Activated CD4-positive, alpha-beta T cell treated with anti-CD3 and anti-CD28 coated beads for 36 hours (primary cell): ENCODE measurements at regions of chr3 and their contacts with region 1.

Region 1: GRCh38 chr3:10026084-10026890 is at the start of gene FANCD2:
- DNase-seq: peak; percentile 95
- ATAC-seq: peak; percentile 91
- H3K4me3 Mint-ChIP-seq: peak within 1 kb of the TSS; percentile 95
- H3K27ac Mint-ChIP-seq: peak within 1 kb of the TSS; percentile 99
- H3K4me1 Mint-ChIP-seq: peaks cover 25% of the 10 kb centered on the region
- H3K27me3 Mint-ChIP-seq: no peaks in the 10 kb centered on the region
- total RNA-seq, gene FANCD2: 86.4 to 87.7 TPM

Region 2: DNA sequence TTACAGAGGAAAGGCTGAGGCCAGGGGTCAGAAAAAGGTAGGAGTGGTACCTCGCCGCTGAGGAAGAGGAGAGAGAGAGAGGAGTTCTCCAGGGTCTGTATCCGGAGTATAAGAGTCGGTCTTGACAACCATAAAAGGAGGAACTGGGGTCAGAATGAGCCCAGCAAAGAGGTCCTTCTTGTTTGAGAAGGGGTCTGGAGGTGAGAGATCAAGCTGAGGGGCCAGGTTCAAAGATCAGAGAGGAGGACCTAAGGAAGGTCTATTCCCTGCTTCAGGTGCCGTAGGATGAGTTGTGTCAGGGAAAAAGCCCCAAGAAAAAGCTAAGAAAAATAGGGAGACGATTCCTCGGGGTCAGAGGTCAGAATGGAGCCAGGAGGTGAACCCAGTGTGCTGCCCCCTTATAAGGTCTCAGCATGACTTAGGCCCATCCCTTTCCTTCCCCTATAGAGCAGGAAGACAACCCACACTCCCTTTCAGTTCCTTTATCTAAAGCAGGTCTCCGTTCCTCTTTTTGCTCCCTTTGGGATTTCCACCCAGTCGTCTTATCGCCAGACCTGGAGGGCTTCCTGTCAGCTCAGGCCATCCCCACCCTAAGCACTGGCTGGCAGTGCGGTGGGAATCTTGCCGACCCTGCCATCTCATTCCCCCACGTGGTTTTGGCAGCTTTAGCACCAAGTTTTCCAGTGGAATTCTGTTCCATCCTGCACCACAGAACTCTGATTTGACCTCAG is 376.3 kb before region 1 on chr3:
- CTCF ChIA-PET with region 1: no interaction called
- POLR2A ChIA-PET with region 1: no interaction called
- intact Hi-C with region 1: loop called in 1 of 2 experiments (anchors 2 kb)
- DNase-seq: no peak
- ATAC-seq: peak; percentile 1
- H3K4me3 Mint-ChIP-seq: peak overlapping the region; percentile 95
- H3K27ac Mint-ChIP-seq: peak overlapping the region; percentile 92
- H3K4me1 Mint-ChIP-seq: peaks cover 24% of the 10 kb centered on the region
- H3K27me3 Mint-ChIP-seq: no peaks in the 10 kb centered on the region

Region 3: GRCh38 chr3:9843715-9844438 is 182.4 kb before region 1 on chr3 and contains the start of gene RPUSD3:
- CTCF ChIA-PET with region 1: no interaction called
- POLR2A ChIA-PET with region 1: no interaction called
- intact Hi-C with region 1: loop called in 1 of 2 experiments (anchors 1 kb)
- DNase-seq: peak; percentile 98
- ATAC-seq: peak; percentile 97
- H3K4me3 Mint-ChIP-seq: peak within 1 kb of the TSS; percentile 99
- H3K27ac Mint-ChIP-seq: peak within 1 kb of the TSS; percentile 96
- H3K4me1 Mint-ChIP-seq: peaks cover 28% of the 10 kb centered on the region
- H3K27me3 Mint-ChIP-seq: no peaks in the 10 kb centered on the region
- total RNA-seq, gene RPUSD3: 79.2 to 81.5 TPM

Region 4: DNA sequence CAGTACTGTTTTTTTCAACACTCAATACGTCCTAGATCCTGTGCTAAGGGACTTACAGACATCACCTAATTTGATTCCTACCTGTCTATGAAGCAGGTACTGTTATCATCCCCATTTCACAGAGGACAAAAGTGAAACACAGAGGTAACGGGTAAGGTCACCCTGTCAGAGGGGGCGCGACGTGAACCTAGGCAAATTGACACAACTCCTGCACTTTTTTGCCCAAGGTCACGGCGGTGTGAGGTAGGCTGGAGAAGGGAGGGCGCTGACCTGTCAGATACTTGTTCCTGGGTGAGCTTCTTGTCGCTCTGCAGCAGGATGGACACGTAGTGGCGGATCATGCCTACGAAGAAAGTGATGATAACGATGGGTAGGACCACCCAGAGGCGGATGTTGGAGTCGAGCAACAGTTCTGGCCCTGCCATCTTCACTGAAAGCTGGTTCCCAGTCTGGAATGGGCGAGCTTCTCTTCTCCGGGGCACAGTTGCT is 40.0 kb before region 1 on chr3:
- CTCF ChIA-PET with region 1: no interaction called
- POLR2A ChIA-PET with region 1: interaction called, 3 read pairs
- intact Hi-C with region 1: loop called (anchors 1 kb)
- DNase-seq: no peak
- ATAC-seq: peak; percentile 31
- H3K4me3 Mint-ChIP-seq: peak overlapping the region; percentile 94
- H3K27ac Mint-ChIP-seq: peak overlapping the region; percentile 98
- H3K4me1 Mint-ChIP-seq: peaks cover 32% of the 10 kb centered on the region
- H3K27me3 Mint-ChIP-seq: no peaks in the 10 kb centered on the region

Region 5: DNA sequence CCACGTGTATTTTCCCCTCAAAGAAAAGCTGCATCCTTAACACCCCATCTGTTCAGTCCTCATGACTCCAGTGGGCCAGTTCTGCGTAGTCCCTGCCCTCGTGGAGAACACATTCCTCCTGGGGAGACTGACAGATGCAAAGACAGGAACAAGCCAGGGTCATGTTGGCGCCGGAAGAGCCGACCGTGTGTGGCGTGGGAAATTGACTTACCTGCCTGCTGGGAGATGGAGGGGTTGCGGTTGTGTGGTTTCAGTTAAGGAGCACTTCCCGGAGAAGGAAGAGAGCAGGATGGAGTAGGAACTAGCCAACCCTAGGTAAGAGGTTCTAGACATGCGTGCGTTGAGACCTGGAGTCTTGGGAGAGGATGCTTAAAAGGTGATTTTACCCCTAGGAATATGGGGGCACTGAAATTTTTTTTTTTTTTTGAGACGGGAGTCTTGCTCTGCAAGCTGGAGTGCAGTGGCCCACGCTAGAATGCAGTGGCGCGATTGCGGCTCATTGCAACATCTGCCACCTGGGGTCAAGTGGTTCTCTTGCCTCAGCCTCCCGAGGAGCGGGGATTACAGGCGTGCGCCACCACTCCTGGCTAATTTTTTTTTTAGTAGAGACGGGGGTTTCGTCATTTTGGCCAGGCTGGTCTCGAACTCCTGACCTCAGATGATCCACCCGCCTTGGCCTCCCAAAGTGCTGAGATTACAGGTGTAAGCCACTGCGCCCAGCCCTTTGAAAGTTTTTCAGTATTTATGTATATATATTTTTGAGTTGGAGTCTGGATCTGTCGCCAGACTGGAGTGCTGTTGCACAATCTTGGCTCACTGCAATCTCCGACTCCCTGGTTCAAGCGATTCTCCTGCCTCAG is 116.7 kb after region 1 on chr3:
- CTCF ChIA-PET with region 1: interaction called, 3 read pairs
- POLR2A ChIA-PET with region 1: no interaction called
- intact Hi-C with region 1: loop called in 1 of 2 experiments (anchors 1 kb)
- DNase-seq: peak; percentile 57
- ATAC-seq: peak; percentile 15
- H3K4me3 Mint-ChIP-seq: peak overlapping the region; percentile 97
- H3K27ac Mint-ChIP-seq: peak overlapping the region; percentile 89
- H3K4me1 Mint-ChIP-seq: peaks cover 28% of the 10 kb centered on the region
- H3K27me3 Mint-ChIP-seq: no peaks in the 10 kb centered on the region

Region 6: DNA sequence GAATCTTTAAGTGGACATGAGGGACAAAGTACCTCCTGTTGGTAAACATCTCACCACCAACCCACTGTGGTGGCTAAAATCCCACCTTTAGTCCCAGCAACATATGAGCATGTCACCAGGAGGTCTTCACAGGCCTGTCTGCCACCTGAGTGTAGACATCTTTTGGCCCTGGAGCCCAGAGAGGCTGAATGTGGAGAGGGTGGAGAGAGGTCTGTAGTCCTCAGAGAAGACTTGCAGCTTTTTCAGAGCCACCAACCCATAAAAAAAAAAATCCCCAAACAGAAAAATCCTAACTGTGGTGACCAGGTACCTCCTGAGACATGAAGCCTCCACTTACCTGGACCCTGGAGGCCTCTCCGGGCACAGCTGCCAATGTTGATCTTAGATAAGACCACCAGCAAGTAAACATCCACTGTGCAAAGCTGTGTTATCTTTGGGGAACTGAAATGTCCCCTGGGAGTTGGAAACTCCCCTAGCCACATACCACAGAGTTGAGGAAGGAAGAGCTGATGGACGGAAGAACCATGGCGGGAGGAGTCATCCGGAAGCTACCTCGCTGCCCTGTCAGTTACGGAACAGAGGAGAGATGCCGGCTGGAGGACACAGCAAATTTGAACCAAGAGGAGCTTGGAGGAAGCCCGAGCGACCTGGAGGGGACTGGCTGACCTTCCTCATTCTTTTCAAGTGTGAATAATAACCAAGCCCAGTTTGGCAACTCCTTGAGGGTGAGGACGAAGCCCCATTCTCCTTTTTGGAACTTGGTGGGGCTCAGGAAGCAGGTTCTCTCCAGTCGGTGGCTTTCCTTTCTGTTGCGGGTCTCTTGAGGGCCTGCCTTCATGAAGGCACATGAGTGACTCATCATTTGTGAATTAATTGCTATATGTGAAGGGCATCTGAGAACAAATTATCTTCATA is 266.5 kb after region 1 on chr3 and contains the start of gene GHRL:
- CTCF ChIA-PET with region 1: no interaction called
- POLR2A ChIA-PET with region 1: no interaction called
- intact Hi-C with region 1: no loop called
- DNase-seq: no peak
- ATAC-seq: peak; percentile 47
- H3K4me3 Mint-ChIP-seq: no peak within 1 kb of the TSS
- H3K27ac Mint-ChIP-seq: peak within 1 kb of the TSS; percentile 55
- H3K4me1 Mint-ChIP-seq: peaks cover 8% of the 10 kb centered on the region
- H3K27me3 Mint-ChIP-seq: no peaks in the 10 kb centered on the region
- total RNA-seq, gene GHRL: 0.19 to 0.30 TPM

Region 7: DNA sequence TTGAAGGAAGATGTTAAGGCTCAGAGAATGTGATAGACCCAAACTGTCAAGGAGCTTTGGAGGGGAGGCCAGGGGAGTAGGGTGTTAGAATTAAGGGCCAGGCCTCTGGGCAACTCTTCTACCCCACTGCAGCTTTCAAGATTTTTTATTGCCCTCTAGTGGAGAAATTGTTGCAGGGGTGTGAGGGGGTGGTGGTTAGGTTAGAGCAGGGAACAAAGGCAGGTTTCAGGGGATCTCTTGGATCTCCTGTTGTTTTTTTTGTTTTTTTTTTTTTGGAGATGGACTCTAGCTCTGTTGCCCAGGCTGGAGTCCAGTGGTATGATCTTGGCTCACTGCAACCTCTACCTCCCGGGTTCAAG is 296.0 kb after region 1 on chr3:
- CTCF ChIA-PET with region 1: interaction called, 3 read pairs
- POLR2A ChIA-PET with region 1: no interaction called
- intact Hi-C with region 1: loop called in 1 of 2 experiments (anchors 1 kb)
- DNase-seq: peak; percentile 37
- ATAC-seq: peak; percentile 22
- H3K4me3 Mint-ChIP-seq: no peak overlapping the region
- H3K27ac Mint-ChIP-seq: peak overlapping the region; percentile 3
- H3K4me1 Mint-ChIP-seq: peaks cover 23% of the 10 kb centered on the region
- H3K27me3 Mint-ChIP-seq: peaks cover 4% of the 10 kb centered on the region